ENCODE measurements at regions of chr16 and their contacts with region 1.

Region 1: DNA sequence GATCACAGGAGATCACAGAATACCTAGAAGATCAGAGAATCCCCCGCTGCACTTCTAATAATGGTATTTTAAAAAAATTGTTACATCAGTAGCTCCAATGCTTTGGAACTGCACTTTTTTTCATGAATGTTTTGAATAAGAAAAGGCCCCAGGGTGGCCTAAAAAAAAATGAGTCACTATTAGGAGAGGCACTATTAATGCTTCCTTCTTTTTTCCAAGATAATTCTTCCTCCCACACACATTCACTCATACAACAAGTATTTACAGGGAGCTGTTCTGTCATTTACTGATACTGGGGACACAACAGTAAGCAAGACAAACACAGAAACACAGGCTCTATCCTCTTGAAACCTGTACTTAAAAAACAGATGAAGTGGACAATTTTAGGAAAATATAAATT is 675 bp upstream of the PDZD9 start:
- DNase-seq: no peak

Region 2: GRCh38 chr16:22055878-22056277 is 54.3 kb after region 1 on chr16:
- intact Hi-C with region 1: no loop called
- DNase-seq: no peak

Region 3: GRCh38 chr16:22077700-22078313 is 76.2 kb after region 1 on chr16:
- intact Hi-C with region 1: loop called (anchors 2 kb)
- DNase-seq: peak in 7 of 10 donors; percentile 41 to 92 (median 63)

Region 4: DNA sequence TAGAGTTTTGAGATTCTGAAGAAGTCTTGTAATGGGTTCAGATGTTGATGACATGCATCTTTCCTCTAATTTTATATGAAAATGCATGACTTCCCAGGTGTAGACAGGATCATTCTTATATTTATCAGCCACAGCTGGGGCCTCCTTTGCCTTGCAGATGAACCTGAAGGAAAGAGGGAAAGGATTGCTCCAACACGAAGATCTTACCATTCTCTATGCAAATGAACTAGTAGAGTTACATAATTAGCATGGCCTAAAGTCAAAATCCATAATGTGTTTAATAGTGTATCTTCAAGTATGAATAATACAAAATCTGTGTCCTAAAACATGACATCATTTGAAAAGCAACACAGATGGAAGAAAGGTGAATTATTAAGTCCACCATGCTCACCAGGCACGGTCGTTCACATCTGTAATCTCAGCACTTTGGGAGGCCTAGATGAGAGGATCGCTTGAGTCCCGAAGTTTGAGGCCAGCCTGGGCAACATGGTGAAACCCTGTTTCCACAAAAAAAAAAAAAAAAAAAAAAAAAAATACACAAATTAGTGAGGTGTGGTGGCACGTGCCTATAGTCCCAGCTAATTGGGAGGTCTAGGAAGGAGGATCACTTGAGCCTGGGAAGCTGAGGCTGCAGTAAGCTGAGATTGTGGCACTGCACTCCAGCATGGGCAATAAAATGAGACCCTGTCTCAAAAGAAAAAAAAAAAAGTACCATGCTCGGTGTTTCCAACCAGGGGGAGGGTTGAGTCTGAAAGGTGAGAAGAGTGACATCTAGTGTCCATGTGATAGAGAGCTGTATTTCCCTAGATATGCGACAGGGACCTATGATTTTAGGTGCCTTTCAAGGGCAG is 97.0 kb after region 1 on chr16:
- intact Hi-C with region 1: loop called (anchors 5 kb)
- DNase-seq: no peak

Measured in posterior cingulate gyrus (tissue), 11 donors.